ENCODE measurements at regions of chr14 and their contacts with region 1.

Region 1: DNA sequence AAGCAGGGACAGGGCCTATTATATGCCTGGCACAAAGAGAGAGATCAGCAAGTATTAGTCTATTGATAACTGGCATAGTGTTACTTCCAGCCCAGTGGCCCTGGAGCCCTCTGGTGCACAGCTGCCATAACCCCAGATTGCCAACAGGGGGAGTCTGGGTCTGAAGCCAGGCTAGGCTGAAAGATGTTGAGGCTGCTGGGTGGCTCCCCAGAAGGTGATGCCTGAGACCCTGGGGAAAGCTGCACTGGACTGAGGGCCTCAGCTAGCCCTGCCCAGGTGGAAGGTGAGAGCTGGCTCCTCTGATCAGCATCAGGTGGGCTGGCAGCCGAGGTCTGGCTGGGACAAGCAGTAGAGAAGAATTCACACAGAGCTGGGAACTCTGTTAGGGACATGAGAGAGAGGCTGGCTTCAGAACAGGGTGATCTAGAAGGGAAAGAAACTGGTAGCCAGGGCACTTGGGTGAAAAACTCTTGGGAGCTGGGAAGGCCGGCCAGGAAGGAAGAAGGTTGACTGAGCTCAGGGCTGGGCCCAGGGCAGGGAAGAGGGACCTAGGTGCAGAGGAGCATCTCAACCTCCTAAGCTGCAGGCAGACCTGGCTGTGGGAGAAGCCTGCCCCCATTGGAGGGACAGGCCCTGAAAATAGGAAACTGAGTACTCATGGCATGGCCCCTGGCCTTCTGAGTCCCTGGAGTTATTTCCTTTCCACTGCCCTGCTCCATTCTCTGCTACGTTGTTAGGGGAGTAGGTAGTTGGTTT is 3.9 kb downstream of the GZMH start:
- DNase-seq: peak; percentile 85
- H3K4me3 Mint-ChIP-seq: peak overlapping the region; percentile 76
- H3K27ac Mint-ChIP-seq: peak overlapping the region; percentile 76
- H3K4me1 Mint-ChIP-seq: peaks cover 31% of the 10 kb centered on the region
- H3K27me3 Mint-ChIP-seq: no peaks in the 10 kb centered on the region

Region 2: GRCh38 chr14:24481622-24482324 is 123.8 kb before region 1 on chr14:
- CTCF ChIA-PET with region 1: interaction called, 5 read pairs
- intact Hi-C with region 1: loop called (anchors 2 kb)
- DNase-seq: peak; percentile 80
- H3K4me3 Mint-ChIP-seq: peak overlapping the region; percentile 68
- H3K27ac Mint-ChIP-seq: peak overlapping the region; percentile 22
- H3K4me1 Mint-ChIP-seq: peaks cover 23% of the 10 kb centered on the region
- H3K27me3 Mint-ChIP-seq: no peaks in the 10 kb centered on the region

Region 3: GRCh38 chr14:24630872-24631477 is 25.4 kb after region 1 on chr14:
- CTCF ChIA-PET with region 1: interaction called, 10 read pairs
- intact Hi-C with region 1: loop called (anchors 2 kb)
- DNase-seq: no peak
- H3K4me3 Mint-ChIP-seq: no peak overlapping the region
- H3K27ac Mint-ChIP-seq: no peak overlapping the region
- H3K4me1 Mint-ChIP-seq: peaks cover 4% of the 10 kb centered on the region
- H3K27me3 Mint-ChIP-seq: no peaks in the 10 kb centered on the region

Region 4: GRCh38 chr14:24678801-24679247 is 73.2 kb after region 1 on chr14:
- CTCF ChIA-PET with region 1: interaction called, 16 read pairs
- intact Hi-C with region 1: loop called (anchors 1 kb)
- DNase-seq: peak; percentile 89
- H3K4me3 Mint-ChIP-seq: peak overlapping the region; percentile 70
- H3K27ac Mint-ChIP-seq: peak overlapping the region; percentile 88
- H3K4me1 Mint-ChIP-seq: peaks cover 59% of the 10 kb centered on the region
- H3K27me3 Mint-ChIP-seq: no peaks in the 10 kb centered on the region